Caco-2 (cell line): ENCODE measurements at regions of chr22 and their contacts with region 1.

Region 1: GRCh38 chr22:19432133-19432851 is at the start of gene MRPL40:
- DNase-seq: peak; percentile 93 to 95
- H3K4me3 ChIP-seq: peak within 1 kb of the TSS; percentile 64
- H3K4me3 Mint-ChIP-seq: peak within 1 kb of the TSS; percentile 80
- H3K27ac Mint-ChIP-seq: peak within 1 kb of the TSS; percentile 85
- H3K4me1 ChIP-seq: peaks cover 9% of the 10 kb centered on the region; the same call in 1 of the 2 replicates
- H3K4me1 Mint-ChIP-seq: peaks cover 8% of the 10 kb centered on the region
- H3K27me3 ChIP-seq: no peaks in the 10 kb centered on the region
- H3K27me3 Mint-ChIP-seq: no peaks in the 10 kb centered on the region
- CTCF ChIP-seq: no peak
- total RNA-seq, gene MRPL40: 42.6 and 42.7 TPM in 2 replicates

Region 2: GRCh38 chr22:19479357-19480172 is 47.3 kb after region 1 on chr22 and contains the start of gene CDC45:
- CTCF ChIA-PET with region 1: no interaction called
- POLR2A ChIA-PET with region 1: interaction called, 3 read pairs
- intact Hi-C with region 1: loop called (anchors 2 kb)
- DNase-seq: peak; percentile 95 to 97
- H3K4me3 ChIP-seq: peak within 1 kb of the TSS; percentile 96
- H3K4me3 Mint-ChIP-seq: peak within 1 kb of the TSS; percentile 95
- H3K27ac Mint-ChIP-seq: peak within 1 kb of the TSS; percentile 100
- H3K4me1 ChIP-seq: peaks cover 6% of the 10 kb centered on the region; the same call in 1 of the 2 replicates
- H3K4me1 Mint-ChIP-seq: peaks cover 23% of the 10 kb centered on the region
- H3K27me3 ChIP-seq: no peaks in the 10 kb centered on the region
- H3K27me3 Mint-ChIP-seq: no peaks in the 10 kb centered on the region
- CTCF ChIP-seq: no peak
- total RNA-seq, gene CDC45: 41.7 and 44.6 TPM in 2 replicates